Uterus (tissue), 4 donors: ENCODE measurements at regions of chr1 and their contacts with region 1.

Region 1: DNA sequence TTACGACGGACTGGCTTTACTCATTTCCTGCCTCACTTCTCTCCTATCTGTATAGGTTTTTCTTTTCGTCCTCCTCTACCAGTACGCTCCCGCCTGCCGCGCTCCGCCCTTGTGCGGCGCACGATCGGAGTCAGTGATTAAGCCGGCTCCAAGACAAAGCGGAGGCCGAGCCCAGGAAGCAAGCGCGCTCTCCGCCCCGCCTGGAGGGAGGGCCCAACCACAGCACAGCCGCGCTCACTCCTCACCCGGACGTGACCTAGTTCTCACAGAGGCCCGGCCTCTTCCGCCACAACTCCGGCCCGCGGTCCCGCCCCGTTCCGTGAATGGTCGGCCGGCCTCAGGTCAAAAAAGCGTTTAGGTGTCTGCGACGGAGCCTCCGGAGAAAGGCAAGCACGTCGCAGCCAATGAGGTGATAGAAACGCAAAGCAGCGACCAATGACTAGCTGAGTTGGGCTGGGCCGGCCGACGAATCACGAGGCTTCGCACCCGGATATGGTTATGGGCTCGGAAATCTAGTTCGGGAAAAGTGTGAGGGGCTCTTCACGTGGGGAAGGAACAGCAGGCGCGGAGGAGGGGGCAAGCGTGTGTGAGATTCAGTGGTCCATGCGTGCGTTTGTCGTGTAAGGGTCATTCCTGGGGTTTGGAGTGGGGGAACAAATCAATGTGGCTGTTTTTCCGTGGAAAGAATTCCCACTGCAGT is at the start of gene METTL13:
- DNase-seq: peak; percentile 98
- H3K4me3 ChIP-seq: peak within 1 kb of the TSS; percentile 78 to 95
- H3K27ac ChIP-seq: peak within 1 kb of the TSS; percentile 87 to 88
- H3K4me1 ChIP-seq: peaks cover 0 to 4% of the 10 kb centered on the region in 2 donors
- H3K27me3 ChIP-seq: no peaks in the 10 kb centered on the region
- CTCF ChIP-seq: peak in 1 of 4 experiments; percentile 14
- POLR2A ChIP-seq: peak; percentile 95 to 99
- total RNA-seq, gene METTL13: 6.7 to 23.0 (median 12.3) TPM

Region 2: GRCh38 chr1:172532700-172533509 is 751.6 kb after region 1 on chr1 and contains the start of gene SUCO:
- intact Hi-C with region 1: loop called (anchors 5 kb)
- DNase-seq: peak; percentile 100
- H3K4me3 ChIP-seq: peak within 1 kb of the TSS; percentile 95 to 99
- H3K27ac ChIP-seq: peak within 1 kb of the TSS; percentile 95 to 100
- H3K4me1 ChIP-seq: no peaks in the 10 kb centered on the region
- H3K27me3 ChIP-seq: no peaks in the 10 kb centered on the region
- CTCF ChIP-seq: peak in 1 of 4 experiments; percentile 18
- POLR2A ChIP-seq: peak; percentile 96 to 98
- total RNA-seq, gene SUCO: 39.7 to 129 (median 93.9) TPM